GM12878 (cell line): ENCODE measurements at regions of chr6 and their contacts with region 1.

Region 1: DNA sequence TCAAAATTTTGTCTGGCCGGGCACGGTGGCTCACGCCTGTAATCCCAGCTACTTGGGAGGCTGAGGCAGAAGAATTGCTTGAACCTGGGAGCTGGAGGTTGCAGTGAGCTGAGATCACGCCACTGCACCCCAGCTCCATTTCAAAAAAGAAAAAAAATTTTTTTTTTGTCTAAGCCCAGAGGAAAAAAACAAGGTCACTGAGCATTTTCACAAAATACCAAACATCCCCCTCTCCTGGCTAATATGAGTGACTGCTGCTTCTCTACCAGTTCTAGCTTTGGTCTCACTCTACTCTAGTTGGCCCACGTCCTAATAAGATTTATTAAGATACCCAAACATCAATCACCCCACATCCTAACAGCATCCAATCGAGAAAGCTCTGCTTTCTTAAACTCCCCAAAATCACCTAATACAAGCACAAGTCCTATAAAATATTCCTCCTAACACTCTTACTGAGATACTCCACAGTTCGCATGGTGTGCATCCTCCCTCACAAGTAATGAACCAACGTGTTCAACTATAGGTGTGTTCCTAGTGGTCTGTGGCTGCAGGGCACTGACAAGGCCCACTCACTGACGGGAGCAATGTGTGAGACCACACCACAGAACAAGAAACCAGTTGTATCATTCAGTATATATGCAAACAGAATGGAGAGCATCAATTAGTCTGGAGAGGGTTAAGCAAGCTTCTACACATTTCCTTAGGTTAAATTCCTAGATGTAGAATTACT is 64.2 kb downstream of the FKBP5 start:
- DNase-seq: no peak
- ATAC-seq: no peak
- H3K4me3 ChIP-seq: no peak overlapping the region
- H3K27ac ChIP-seq: no peak overlapping the region
- H3K4me1 ChIP-seq: no peaks in the 10 kb centered on the region
- H3K27me3 ChIP-seq: no peaks in the 10 kb centered on the region
- CTCF ChIP-seq: peak in 1 of 3 experiments; percentile 23; a peak in 2 of 6 replicates
- EP300 ChIP-seq: no peak
- POLR2A ChIP-seq: no peak
- RAD21 ChIP-seq: no peak

Region 2: GRCh38 chr6:35601331-35602132 is 23.0 kb before region 1 on chr6:
- CTCF ChIA-PET with region 1: interaction called, 3 read pairs
- POLR2A ChIA-PET with region 1: no interaction called
- RAD21 ChIA-PET with region 1: no interaction called
- SMC1A ChIA-PET with region 1: interaction called, 17 read pairs
- in situ Hi-C with region 1: no loop called
- intact Hi-C with region 1: no loop called
- DNase-seq: no peak
- ATAC-seq: no peak
- H3K4me3 ChIP-seq: no peak overlapping the region
- H3K27ac ChIP-seq: peak overlapping the region; percentile 34; the same call in 1 of the 2 replicates
- H3K4me1 ChIP-seq: peaks cover 23% of the 10 kb centered on the region
- H3K27me3 ChIP-seq: no peaks in the 10 kb centered on the region
- CTCF ChIP-seq: no peak
- EP300 ChIP-seq: no peak
- POLR2A ChIP-seq: no peak
- RAD21 ChIP-seq: no peak

Region 3: DNA sequence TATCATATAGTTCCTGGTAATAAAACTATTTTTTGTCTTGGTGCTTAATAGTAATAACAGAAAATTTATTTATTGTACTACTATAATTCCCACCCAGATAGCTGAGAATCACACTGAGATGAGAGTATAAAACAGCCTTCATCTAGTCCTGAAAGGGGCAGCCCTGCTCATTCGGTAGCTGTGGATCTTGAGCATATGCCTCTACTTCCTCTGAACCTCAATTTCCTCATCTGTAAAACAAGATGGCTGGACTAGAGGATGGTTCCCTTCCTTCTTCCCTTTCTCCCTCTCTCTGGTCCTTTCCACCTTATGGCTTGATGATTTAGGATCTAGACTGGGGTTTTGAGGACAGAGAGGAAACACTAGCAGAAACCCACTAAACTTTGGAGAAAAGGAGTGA is 49.2 kb after region 1 on chr6:
- CTCF ChIA-PET with region 1: no interaction called
- POLR2A ChIA-PET with region 1: no interaction called
- RAD21 ChIA-PET with region 1: no interaction called
- SMC1A ChIA-PET with region 1: no interaction called
- in situ Hi-C with region 1: no loop called
- intact Hi-C with region 1: no loop called
- DNase-seq: no peak
- ATAC-seq: no peak
- H3K4me3 ChIP-seq: no peak overlapping the region
- H3K27ac ChIP-seq: no peak overlapping the region
- H3K4me1 ChIP-seq: peaks cover 3% of the 10 kb centered on the region
- H3K27me3 ChIP-seq: no peaks in the 10 kb centered on the region
- CTCF ChIP-seq: no peak
- EP300 ChIP-seq: no peak
- POLR2A ChIP-seq: no peak
- RAD21 ChIP-seq: no peak

Region 4: GRCh38 chr6:35717449-35718374 is 93.2 kb after region 1 on chr6:
- CTCF ChIA-PET with region 1: no interaction called
- POLR2A ChIA-PET with region 1: no interaction called
- RAD21 ChIA-PET with region 1: no interaction called
- SMC1A ChIA-PET with region 1: no interaction called
- in situ Hi-C with region 1: no loop called
- intact Hi-C with region 1: no loop called
- DNase-seq: no peak
- ATAC-seq: no peak
- H3K4me3 ChIP-seq: no peak overlapping the region
- H3K27ac ChIP-seq: peak overlapping the region; percentile 76
- H3K4me1 ChIP-seq: peaks cover 50% of the 10 kb centered on the region
- H3K27me3 ChIP-seq: no peaks in the 10 kb centered on the region
- CTCF ChIP-seq: no peak
- EP300 ChIP-seq: no peak
- POLR2A ChIP-seq: no peak
- RAD21 ChIP-seq: no peak